CD4-positive, alpha-beta memory T cell (primary cell): ENCODE measurements at regions of chr9 and their contacts with region 1.

Region 1: DNA sequence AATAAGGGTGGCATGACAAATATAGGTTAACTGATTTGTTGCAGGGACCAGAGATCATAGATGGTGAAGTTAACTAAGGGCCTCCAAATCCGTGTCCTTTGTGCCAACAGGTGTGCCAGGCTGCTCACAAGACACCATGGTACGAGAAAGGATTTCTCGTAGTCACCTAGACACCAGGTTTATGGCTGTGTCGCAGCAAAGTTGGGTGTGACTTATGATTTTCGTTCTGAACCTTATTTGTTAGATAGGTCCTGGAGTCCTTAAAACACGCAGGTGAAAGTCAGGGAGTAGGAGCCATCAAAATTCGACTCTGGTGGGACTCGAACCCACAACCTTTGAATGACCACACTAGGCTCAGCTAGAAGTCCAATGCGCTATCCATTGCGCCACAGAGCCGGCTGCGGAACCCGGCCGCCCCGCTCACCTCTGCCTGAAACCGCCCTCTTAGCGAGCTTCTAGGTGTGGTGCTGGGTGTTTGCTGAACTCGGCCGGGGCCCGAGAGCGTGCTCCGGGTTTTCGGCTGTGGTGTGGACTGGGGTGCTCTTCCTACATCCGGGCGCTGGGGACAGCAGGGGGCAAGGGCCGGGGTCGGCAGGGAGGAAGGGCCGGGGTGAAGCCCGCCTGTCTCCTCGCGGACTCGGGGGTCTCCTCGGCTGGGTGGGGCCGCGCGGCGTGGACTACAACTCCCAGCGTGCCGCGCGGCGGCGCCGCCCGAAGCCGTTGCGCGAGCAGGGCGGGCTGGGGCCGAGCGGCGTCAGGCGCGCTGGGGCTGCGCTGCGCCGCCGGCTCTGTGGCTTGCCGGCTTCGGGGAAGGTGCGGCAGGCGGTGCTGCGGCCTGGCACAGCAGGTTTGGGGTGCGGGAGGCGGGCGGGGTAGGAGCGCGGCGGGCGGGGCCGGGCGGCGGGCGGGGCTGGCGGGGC is at the start of gene SLC27A4:
- DNase-seq: peak; percentile 83 to 87 (median 85)
- H3K4me3 ChIP-seq: peak within 1 kb of the TSS; percentile 68 to 87
- H3K4me3 Mint-ChIP-seq: peak within 1 kb of the TSS; percentile 89 to 99 (median 94)
- H3K27ac ChIP-seq: peak within 1 kb of the TSS; percentile 58
- H3K27ac Mint-ChIP-seq: peak within 1 kb of the TSS; percentile 84 to 96 (median 93)
- H3K4me1 ChIP-seq: peaks cover 15% of the 10 kb centered on the region
- H3K4me1 Mint-ChIP-seq: peaks cover 6 to 16% (median 7%) of the 10 kb centered on the region in 4 donors
- H3K27me3 ChIP-seq: no peaks in the 10 kb centered on the region
- H3K27me3 Mint-ChIP-seq: no peaks in the 10 kb centered on the region
- total RNA-seq, gene SLC27A4: 13.9 to 16.3 TPM

Region 2: DNA sequence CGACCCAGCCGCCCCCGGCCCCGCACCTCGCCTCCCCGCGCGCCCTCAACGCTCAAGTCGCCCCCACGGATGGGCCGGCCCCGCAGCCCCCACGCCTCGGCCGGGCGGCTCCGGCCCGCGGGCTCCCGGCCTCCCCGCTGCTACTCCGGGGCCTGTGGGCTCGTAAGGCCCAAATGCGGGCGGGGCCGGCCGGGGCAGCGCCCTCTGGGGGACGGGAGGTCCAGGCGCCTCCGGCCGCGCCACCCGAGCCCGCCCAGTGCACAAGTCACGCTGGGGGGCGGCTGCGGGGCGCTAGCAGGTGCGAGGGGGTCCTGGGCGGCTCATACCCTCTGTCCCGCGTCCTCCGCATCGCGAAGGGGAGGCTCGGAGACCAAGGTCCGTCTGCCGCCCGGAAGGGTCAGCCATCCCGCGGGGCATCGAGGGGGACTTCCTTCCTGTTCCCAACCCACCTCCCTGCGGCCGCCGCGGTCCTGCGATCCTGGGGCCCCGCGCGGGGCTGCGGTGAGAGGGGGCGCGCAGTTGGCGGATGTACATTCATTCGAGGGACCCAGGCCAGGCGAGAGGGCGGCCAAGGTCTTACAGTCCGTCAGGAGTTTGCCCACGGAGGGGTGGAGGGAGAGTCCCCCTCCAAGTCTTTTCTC is 148.5 kb before region 1 on chr9 and contains the start of gene CIZ1:
- CTCF ChIA-PET with region 1: interaction called, 6 read pairs
- POLR2A ChIA-PET with region 1: interaction called, 3 read pairs
- intact Hi-C with region 1: loop called (anchors 1 kb)
- DNase-seq: peak; percentile 61 to 77 (median 70)
- H3K4me3 ChIP-seq: peak within 1 kb of the TSS; percentile 81 to 82
- H3K4me3 Mint-ChIP-seq: peak within 1 kb of the TSS; percentile 88 to 98 (median 94)
- H3K27ac ChIP-seq: peak within 1 kb of the TSS; percentile 80
- H3K27ac Mint-ChIP-seq: peak within 1 kb of the TSS; percentile 76 to 97 (median 90)
- H3K4me1 ChIP-seq: peaks cover 22% of the 10 kb centered on the region
- H3K4me1 Mint-ChIP-seq: peaks cover 14 to 35% (median 27%) of the 10 kb centered on the region in 4 donors
- H3K27me3 ChIP-seq: no peaks in the 10 kb centered on the region
- H3K27me3 Mint-ChIP-seq: no peaks in the 10 kb centered on the region
- total RNA-seq, gene CIZ1: 156 to 165 TPM

Region 3: GRCh38 chr9:128249908-128250838 is 89.9 kb before region 1 on chr9:
- CTCF ChIA-PET with region 1: interaction called, 5 read pairs
- POLR2A ChIA-PET with region 1: interaction called, 6 read pairs
- intact Hi-C with region 1: loop called (anchors 1 kb)
- DNase-seq: peak; percentile 95 to 98 (median 96)
- H3K4me3 ChIP-seq: peak overlapping the region in 1 of 2 donors; percentile 75
- H3K4me3 Mint-ChIP-seq: peak overlapping the region; percentile 84 to 93 (median 87)
- H3K27ac ChIP-seq: peak overlapping the region; percentile 56
- H3K27ac Mint-ChIP-seq: peak overlapping the region; percentile 77 to 97 (median 94)
- H3K4me1 ChIP-seq: peaks cover 22% of the 10 kb centered on the region
- H3K4me1 Mint-ChIP-seq: peaks cover 10 to 30% (median 19%) of the 10 kb centered on the region in 4 donors
- H3K27me3 ChIP-seq: no peaks in the 10 kb centered on the region
- H3K27me3 Mint-ChIP-seq: peaks cover 4 to 5% of the 10 kb centered on the region in 2 donors

Region 4: DNA sequence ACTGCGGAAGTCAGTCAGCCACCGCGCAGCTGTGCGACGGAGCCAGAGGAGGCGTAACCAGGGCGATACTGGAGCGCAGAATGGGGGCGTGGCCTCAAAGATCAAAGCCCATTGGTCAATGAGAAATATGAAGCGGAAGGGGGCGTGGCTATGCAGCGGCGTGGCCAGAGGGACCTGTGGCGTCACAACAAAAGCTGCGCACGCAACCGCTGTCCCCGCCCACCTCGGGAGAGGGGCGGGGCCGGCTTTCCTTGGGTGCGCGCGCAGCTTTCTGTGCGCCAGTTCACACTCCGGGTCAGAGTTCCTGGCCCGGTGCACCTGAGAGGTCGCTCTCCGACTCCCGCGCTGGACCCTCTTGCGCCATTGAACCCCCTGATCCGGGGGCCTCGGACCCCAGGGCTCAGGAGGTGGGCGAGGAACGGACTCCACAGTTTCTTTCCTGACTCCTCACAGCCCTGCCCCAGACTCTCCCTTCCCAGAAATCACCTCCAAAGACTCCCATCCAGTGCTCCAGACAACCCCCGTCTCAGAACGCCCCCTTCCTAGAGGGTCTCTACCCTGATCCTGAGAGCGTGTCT is 63.9 kb before region 1 on chr9 and contains the starts of genes GOLGA2 and SWI5:
- CTCF ChIA-PET with region 1: interaction called, 6 read pairs
- POLR2A ChIA-PET with region 1: interaction called, 10 read pairs
- intact Hi-C with region 1: loop called (anchors 1 kb)
- DNase-seq: peak; percentile 99 to 100 (median 100)
- H3K4me3 ChIP-seq: peak within 1 kb of the TSS; percentile 88
- H3K4me3 Mint-ChIP-seq: peak within 1 kb of the TSS; percentile 94 to 98 (median 97)
- H3K27ac ChIP-seq: peak within 1 kb of the TSS; percentile 82
- H3K27ac Mint-ChIP-seq: peak within 1 kb of the TSS; percentile 92 to 99 (median 97)
- H3K4me1 ChIP-seq: peaks cover 28% of the 10 kb centered on the region
- H3K4me1 Mint-ChIP-seq: peaks cover 17 to 43% (median 32%) of the 10 kb centered on the region in 4 donors
- H3K27me3 ChIP-seq: no peaks in the 10 kb centered on the region
- H3K27me3 Mint-ChIP-seq: no peaks in the 10 kb centered on the region
- total RNA-seq, gene GOLGA2: 76.4 to 82.4 TPM
- total RNA-seq, gene SWI5: 11.5 to 14.9 TPM

Region 5: GRCh38 chr9:128296337-128297220 is 43.5 kb before region 1 on chr9:
- CTCF ChIA-PET with region 1: interaction called, 22 read pairs
- POLR2A ChIA-PET with region 1: interaction called, 6 read pairs
- intact Hi-C with region 1: loop called (anchors 1 kb)
- DNase-seq: no peak
- H3K4me3 ChIP-seq: no peak overlapping the region
- H3K4me3 Mint-ChIP-seq: no peak overlapping the region
- H3K27ac ChIP-seq: no peak overlapping the region
- H3K27ac Mint-ChIP-seq: peak overlapping the region in 2 of 7 donors; percentile 18 to 48
- H3K4me1 ChIP-seq: no peaks in the 10 kb centered on the region
- H3K4me1 Mint-ChIP-seq: peaks cover 2 to 5% (median 4%) of the 10 kb centered on the region in 4 donors
- H3K27me3 ChIP-seq: no peaks in the 10 kb centered on the region
- H3K27me3 Mint-ChIP-seq: no peaks in the 10 kb centered on the region

Region 6: DNA sequence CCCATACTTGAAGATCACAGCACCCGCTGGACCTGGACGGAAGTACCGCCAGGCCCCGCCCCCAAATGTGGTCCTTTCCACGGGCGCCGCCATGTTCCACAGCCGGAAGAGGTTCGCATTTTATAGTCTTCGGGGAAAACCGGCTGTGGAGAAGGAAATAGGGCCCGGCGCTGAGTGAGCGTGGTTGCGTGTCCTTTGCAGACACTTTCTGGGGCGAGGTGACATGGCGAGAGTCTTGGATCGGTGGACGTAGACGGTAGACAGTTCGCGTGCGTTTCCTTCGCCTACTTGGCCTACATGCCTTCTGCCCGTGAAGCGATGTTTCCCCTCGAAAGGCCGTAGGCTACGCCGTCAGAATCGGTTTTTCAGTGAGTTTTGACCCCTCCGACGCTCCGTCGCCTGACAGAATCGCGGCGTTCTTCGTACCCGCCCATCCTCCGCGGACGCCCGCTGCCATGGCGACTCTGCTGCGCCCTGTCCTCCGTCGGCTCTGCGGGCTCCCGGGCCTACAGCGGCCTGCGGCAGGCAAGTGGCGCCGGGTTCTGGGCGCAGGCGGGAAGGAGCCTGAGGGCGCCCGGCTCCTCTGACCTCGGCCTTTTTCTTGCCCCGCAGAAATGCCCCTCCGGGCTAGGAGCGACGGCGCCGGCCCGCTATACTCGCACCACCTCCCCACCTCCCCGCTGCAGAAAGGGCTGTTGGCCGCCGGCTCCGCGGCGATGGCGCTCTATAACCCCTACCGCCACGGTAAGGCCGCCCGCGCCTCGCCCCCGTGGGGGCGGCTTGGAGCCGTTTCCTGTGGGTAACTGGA is 17.4 kb before region 1 on chr9 and contains the starts of genes COQ4 and TRUB2:
- CTCF ChIA-PET with region 1: interaction called, 10 read pairs
- POLR2A ChIA-PET with region 1: interaction called, 8 read pairs
- intact Hi-C with region 1: loop called (anchors 1 kb)
- DNase-seq: peak; percentile 93 to 96 (median 94)
- H3K4me3 ChIP-seq: peak within 1 kb of the TSS; percentile 78 to 98
- H3K4me3 Mint-ChIP-seq: peak within 1 kb of the TSS; percentile 89 to 99 (median 92)
- H3K27ac ChIP-seq: peak within 1 kb of the TSS; percentile 83
- H3K27ac Mint-ChIP-seq: peak within 1 kb of the TSS; percentile 94 to 99 (median 98)
- H3K4me1 ChIP-seq: peaks cover 32% of the 10 kb centered on the region
- H3K4me1 Mint-ChIP-seq: peaks cover 12 to 39% (median 25%) of the 10 kb centered on the region in 4 donors
- H3K27me3 ChIP-seq: no peaks in the 10 kb centered on the region
- H3K27me3 Mint-ChIP-seq: peaks cover 0 to 2% of the 10 kb centered on the region in 2 donors
- total RNA-seq, gene COQ4: 50.0 to 51.3 TPM
- total RNA-seq, gene TRUB2: 19.6 to 19.8 TPM

Region 7: DNA sequence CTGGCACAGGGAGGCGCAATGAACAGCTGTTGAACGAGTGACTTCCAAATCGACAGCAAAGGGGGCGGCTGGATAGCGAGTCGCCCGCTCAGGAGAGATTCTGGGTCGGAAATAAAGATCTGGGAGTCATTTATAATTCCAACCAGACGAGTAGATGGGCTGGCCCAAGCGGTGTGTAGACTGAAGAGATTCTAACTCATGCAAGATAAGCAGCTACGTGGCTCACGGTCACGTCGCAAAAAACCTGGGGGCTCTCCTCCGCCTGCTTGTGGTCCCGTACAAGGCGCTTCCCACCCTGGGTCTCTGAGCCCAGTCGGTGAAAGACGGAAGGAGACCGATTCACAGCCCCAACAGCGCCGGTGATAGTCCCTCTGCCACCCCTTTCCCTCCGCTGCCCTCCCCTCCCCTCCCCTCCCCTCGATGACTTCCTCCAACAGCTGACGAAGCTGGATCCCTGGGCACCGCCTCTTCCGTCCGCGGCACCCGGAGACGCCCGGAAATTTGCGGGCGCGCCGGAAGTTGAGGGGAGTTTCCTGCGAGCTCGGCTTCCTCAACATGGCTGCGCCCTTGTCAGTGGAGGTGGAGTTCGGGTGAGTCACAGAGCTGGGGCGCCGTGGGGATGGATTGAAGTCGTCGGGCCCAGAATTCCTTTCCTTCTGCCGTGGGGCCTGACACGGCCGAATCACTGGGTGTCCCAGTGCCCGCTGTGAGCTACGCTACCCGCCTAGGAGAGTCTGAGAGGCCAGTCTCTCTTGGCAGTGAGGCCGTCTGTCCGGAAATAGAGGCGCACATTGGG is 31.0 kb after region 1 on chr9 and contains the start of gene URM1:
- CTCF ChIA-PET with region 1: interaction called, 6 read pairs
- POLR2A ChIA-PET with region 1: interaction called, 10 read pairs
- intact Hi-C with region 1: loop called (anchors 1 kb)
- DNase-seq: peak; percentile 95 to 98 (median 96)
- H3K4me3 ChIP-seq: peak within 1 kb of the TSS; percentile 88 to 95
- H3K4me3 Mint-ChIP-seq: peak within 1 kb of the TSS; percentile 95 to 98 (median 96)
- H3K27ac ChIP-seq: peak within 1 kb of the TSS; percentile 91
- H3K27ac Mint-ChIP-seq: peak within 1 kb of the TSS; percentile 97 to 99 (median 98)
- H3K4me1 ChIP-seq: peaks cover 20% of the 10 kb centered on the region
- H3K4me1 Mint-ChIP-seq: peaks cover 22 to 37% (median 29%) of the 10 kb centered on the region in 4 donors
- H3K27me3 ChIP-seq: no peaks in the 10 kb centered on the region
- H3K27me3 Mint-ChIP-seq: peaks cover 2 to 4% of the 10 kb centered on the region in 2 donors
- total RNA-seq, gene URM1: 44.1 to 45.5 TPM